Ascending aorta (tissue), 2 donors: ENCODE measurements at regions of chr10 and their contacts with region 1.

Region 1: GRCh38 chr10:51960494-51960895 is 261.1 kb upstream of the CSTF2T start:
- DNase-seq: no peak
- H3K4me3 ChIP-seq: no peak overlapping the region
- H3K27ac ChIP-seq: peak overlapping the region in 1 of 2 donors; percentile 29
- H3K4me1 ChIP-seq: peaks cover 3 to 11% of the 10 kb centered on the region in 2 donors
- H3K27me3 ChIP-seq: no peaks in the 10 kb centered on the region
- CTCF ChIP-seq: peak; percentile 42 to 67 (median 43)

Region 2: GRCh38 chr10:51422311-51423120 is 538.0 kb before region 1 on chr10:
- intact Hi-C with region 1: loop called (anchors 10 kb)
- DNase-seq: peak in 1 of 2 donors; percentile 79
- H3K4me3 ChIP-seq: peak overlapping the region; percentile 14 to 17
- H3K27ac ChIP-seq: peak overlapping the region; percentile 76 to 78
- H3K4me1 ChIP-seq: peaks cover 0 to 38% of the 10 kb centered on the region in 2 donors
- H3K27me3 ChIP-seq: no peaks in the 10 kb centered on the region
- CTCF ChIP-seq: peak; percentile 57 to 82 (median 75)

Region 3: GRCh38 chr10:52030051-52030790 is 69.7 kb after region 1 on chr10:
- intact Hi-C with region 1: no loop called
- DNase-seq: no peak
- H3K4me3 ChIP-seq: no peak overlapping the region
- H3K27ac ChIP-seq: no peak overlapping the region
- H3K4me1 ChIP-seq: peaks cover 0 to 6% of the 10 kb centered on the region in 2 donors
- H3K27me3 ChIP-seq: no peaks in the 10 kb centered on the region
- CTCF ChIP-seq: no peak